PC-3 (cell line): ENCODE measurements at regions of chr19 and their contacts with region 1.

Region 1: GRCh38 chr19:8224394-8225145 is 15.4 kb downstream of the CERS4 start:
- DNase-seq: no peak
- ATAC-seq: no peak
- H3K4me3 ChIP-seq: no peak overlapping the region
- H3K27ac ChIP-seq: no peak overlapping the region
- H3K4me1 ChIP-seq: no peaks in the 10 kb centered on the region
- H3K27me3 ChIP-seq: no peaks in the 10 kb centered on the region
- CTCF ChIP-seq: no peak

Region 2: GRCh38 chr19:7953060-7953459 is 271.5 kb before region 1 on chr19:
- CTCF ChIA-PET with region 1: no interaction called
- POLR2A ChIA-PET with region 1: no interaction called
- intact Hi-C with region 1: no loop called
- DNase-seq: peak; percentile 48
- ATAC-seq: peak; percentile 42
- H3K4me3 ChIP-seq: no peak overlapping the region
- H3K27ac ChIP-seq: no peak overlapping the region
- H3K4me1 ChIP-seq: peaks cover 9% of the 10 kb centered on the region
- H3K27me3 ChIP-seq: no peaks in the 10 kb centered on the region
- CTCF ChIP-seq: no peak

Region 3: DNA sequence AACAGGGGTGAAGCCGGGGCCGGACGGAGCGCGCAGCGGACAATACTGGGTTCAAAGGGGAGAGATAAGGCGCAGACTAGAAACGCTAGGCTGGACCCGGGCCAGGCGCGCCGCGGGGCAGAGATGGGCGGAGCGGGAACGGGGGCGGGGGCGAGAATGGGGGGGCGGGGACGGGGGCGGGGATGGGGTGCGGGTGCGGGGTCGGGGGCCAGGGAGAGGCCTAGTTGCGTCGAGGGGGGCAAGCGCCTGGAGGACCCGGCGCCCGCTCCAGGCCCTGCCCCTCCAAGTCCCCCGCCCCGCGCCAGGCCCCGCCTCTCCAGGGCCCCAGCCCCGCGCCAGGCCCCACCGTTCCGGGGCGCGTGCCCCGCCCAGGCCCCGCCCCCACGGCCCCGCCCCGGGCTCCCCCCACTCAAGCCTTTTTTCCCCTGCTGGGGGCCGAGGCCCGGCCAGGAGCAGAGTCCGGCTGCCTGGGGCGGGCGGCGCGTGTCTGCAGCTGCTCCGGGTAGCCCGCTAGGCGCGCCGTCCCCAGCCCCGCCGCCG is 15.6 kb before region 1 on chr19 and contains the start of gene CERS4:
- CTCF ChIA-PET with region 1: no interaction called
- POLR2A ChIA-PET with region 1: interaction called, 17 read pairs
- intact Hi-C with region 1: no loop called
- DNase-seq: peak; percentile 52
- ATAC-seq: peak; percentile 56
- H3K4me3 ChIP-seq: peak within 1 kb of the TSS; percentile 82
- H3K27ac ChIP-seq: no peak within 1 kb of the TSS
- H3K4me1 ChIP-seq: peaks cover 25% of the 10 kb centered on the region
- H3K27me3 ChIP-seq: 0 out of 2 replicates have a peak, but pooled peaks cover 2% of the 10 kb centered on the region
- CTCF ChIP-seq: no peak
- total RNA-seq, gene CERS4: 39.3 and 43.9 TPM in 2 replicates

Region 4: GRCh38 chr19:8321060-8321985 is 96.8 kb after region 1 on chr19 and contains the starts of genes NDUFA7 and RPS28:
- CTCF ChIA-PET with region 1: interaction called, 18 read pairs
- POLR2A ChIA-PET with region 1: no interaction called
- intact Hi-C with region 1: no loop called
- DNase-seq: peak; percentile 99
- ATAC-seq: peak; percentile 84
- H3K4me3 ChIP-seq: peak within 1 kb of the TSS; percentile 99
- H3K27ac ChIP-seq: peak within 1 kb of the TSS; percentile 63
- H3K4me1 ChIP-seq: peaks cover 19% of the 10 kb centered on the region
- H3K27me3 ChIP-seq: no peaks in the 10 kb centered on the region
- CTCF ChIP-seq: peak; percentile 38; the same call in 1 of the 2 replicates
- total RNA-seq, gene NDUFA7: 98.5 and 144 TPM in 2 replicates
- total RNA-seq, gene RPS28: 2,594 and 2,746 TPM in 2 replicates